ENCODE measurements at regions of chr15 and their contacts with region 1.

Region 1: DNA sequence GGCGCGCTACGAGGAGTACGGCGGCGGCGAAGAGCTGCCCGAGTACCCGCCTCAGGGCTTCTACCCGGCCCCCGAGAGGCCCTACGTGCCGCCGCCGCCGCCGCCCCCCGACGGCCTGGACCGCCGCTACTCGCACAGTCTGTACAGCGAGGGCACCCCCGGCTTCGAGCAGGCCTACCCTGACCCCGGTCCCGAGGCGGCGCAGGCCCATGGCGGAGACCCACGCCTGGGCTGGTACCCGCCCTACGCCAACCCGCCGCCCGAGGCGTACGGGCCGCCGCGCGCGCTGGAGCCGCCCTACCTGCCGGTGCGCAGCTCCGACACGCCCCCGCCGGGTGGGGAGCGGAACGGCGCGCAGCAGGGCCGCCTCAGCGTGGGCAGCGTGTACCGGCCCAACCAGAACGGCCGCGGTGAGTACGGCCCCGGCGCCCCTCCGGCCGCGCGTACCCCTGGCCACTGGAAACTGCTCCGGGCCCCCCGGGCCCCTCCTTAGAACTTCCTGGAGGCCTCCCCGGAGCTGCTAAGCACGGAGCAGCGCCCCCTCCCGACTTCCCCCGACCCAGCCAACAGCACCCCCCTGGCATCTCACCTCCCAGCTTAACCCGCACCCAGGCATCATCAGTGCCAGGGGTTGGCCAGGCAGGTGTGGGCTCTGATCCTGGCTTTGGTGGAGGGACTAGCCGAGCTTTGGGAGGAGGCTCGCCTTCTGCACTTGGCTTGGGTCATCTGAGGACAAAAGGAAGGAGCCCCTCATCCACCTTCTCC is 1.4 kb downstream of the LOXL1 start:
- DNase-seq: peak; percentile 58 to 85 (median 74)
- ATAC-seq: peak; percentile 90 to 92 (median 91)
- H3K4me3 ChIP-seq: peak overlapping the region; percentile 42 to 50
- H3K4me3 Mint-ChIP-seq: peak overlapping the region; percentile 65 to 76 (median 66)
- H3K27ac ChIP-seq: peak overlapping the region; percentile 3
- H3K27ac Mint-ChIP-seq: peak overlapping the region; percentile 64 to 83
- H3K4me1 ChIP-seq: peaks cover 3 to 56% of the 10 kb centered on the region in 2 experiments
- H3K4me1 Mint-ChIP-seq: peaks cover 45 to 57% (median 50%) of the 10 kb centered on the region in 3 donors
- H3K27me3 ChIP-seq: peaks cover 0 to 4% of the 10 kb centered on the region in 2 experiments
- H3K27me3 Mint-ChIP-seq: no peaks in the 10 kb centered on the region

Region 2: DNA sequence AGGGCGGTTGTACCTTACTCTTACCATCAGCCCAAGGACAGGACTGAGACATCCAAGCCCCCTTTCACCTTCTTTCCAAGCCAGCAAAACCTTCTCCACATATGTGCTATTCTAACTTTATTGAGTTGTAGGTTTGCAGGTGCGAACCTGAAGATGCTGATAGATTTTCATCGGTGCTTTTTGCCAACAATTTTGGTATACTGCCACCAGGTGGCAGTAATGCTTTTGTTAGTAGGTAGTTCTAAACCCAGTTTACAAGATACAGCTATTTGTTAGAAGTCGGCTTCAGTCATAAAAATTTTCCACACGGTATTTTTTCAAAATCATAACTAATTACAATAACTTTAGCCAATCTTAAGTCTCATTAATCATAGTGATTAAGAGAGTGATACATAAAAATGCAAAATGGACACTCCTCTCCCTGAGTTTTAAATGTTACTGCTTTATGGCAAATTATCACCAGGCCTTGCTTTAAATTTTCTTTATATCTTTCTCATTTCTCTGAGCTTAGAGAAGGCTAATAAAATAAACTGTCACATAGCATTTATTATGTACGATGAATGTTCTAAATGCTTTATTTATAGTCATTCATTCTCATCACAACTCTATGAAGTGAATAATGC is 53.7 kb before region 1 on chr15:
- CTCF ChIA-PET with region 1: interaction called in 1 of 2 experiments, 15 read pairs
- POLR2A ChIA-PET with region 1: no interaction called
- DNase-seq: peak in 24 of 35 experiments; percentile 2 to 72 (median 18)
- ATAC-seq: no peak
- H3K4me3 ChIP-seq: no peak overlapping the region
- H3K4me3 Mint-ChIP-seq: no peak overlapping the region
- H3K27ac ChIP-seq: no peak overlapping the region
- H3K27ac Mint-ChIP-seq: no peak overlapping the region
- H3K4me1 ChIP-seq: no peaks in the 10 kb centered on the region
- H3K4me1 Mint-ChIP-seq: no peaks in the 10 kb centered on the region
- H3K27me3 ChIP-seq: peaks cover 0 to 25% of the 10 kb centered on the region in 2 experiments
- H3K27me3 Mint-ChIP-seq: peaks cover 33 to 51% of the 10 kb centered on the region in 2 donors

Region 3: DNA sequence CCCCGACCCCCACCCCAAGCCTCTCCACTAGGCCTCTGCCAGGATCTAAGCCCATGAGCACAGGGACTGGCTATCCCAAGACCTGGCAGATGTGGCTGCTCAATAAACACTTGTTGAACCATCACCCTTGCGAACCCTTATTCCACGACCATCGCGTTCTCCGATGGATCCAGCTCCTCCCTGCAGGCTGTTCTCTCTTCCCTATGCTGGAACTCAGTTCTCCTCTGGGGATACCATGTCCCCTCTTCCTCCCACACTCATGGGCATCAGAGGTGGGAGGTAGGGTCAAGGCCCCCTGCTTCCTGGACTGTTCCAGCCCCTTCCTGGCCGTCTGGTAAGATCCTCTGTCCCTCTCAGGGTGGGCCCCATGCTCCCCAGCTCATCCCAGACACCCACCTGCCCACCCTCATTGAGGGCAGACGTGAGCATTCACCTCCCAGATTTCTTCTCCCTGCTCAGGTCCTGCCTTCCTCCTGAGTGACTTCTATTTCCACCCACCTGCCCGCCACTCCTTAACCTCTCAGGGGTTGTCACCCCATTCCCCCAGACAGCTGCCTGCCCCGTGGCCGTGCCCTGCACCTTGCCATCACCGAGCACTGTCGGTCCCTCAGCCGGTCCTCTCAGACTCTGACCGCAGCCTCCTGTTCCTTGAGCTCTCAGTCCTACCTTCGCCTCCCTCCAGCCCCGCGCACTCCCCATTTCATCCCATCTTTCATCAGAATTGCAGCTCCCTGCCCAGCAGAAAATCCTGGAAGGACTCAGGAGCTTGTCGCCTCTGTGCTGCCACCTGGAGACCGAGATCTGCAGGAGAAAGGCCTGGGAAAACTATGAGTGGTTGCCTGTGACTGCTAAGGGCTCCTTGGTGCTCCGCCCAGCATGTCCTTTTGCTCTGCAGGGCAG is 108.9 kb after region 1 on chr15:
- CTCF ChIA-PET with region 1: no interaction called
- POLR2A ChIA-PET with region 1: no interaction called
- DNase-seq: no peak
- ATAC-seq: no peak
- H3K4me3 ChIP-seq: no peak overlapping the region
- H3K4me3 Mint-ChIP-seq: no peak overlapping the region
- H3K27ac ChIP-seq: no peak overlapping the region
- H3K27ac Mint-ChIP-seq: peak overlapping the region in 1 of 2 donors; percentile 39
- H3K4me1 ChIP-seq: no peaks in the 10 kb centered on the region
- H3K4me1 Mint-ChIP-seq: no peaks in the 10 kb centered on the region
- H3K27me3 ChIP-seq: no peaks in the 10 kb centered on the region
- H3K27me3 Mint-ChIP-seq: no peaks in the 10 kb centered on the region

Region 4: GRCh38 chr15:75659141-75659771 is 1731.6 kb after region 1 on chr15:
- CTCF ChIA-PET with region 1: interaction called in 1 of 2 experiments, 10 read pairs
- POLR2A ChIA-PET with region 1: no interaction called
- DNase-seq: no peak
- ATAC-seq: no peak
- H3K4me3 ChIP-seq: no peak overlapping the region
- H3K4me3 Mint-ChIP-seq: no peak overlapping the region
- H3K27ac ChIP-seq: no peak overlapping the region
- H3K27ac Mint-ChIP-seq: no peak overlapping the region
- H3K4me1 ChIP-seq: no peaks in the 10 kb centered on the region
- H3K4me1 Mint-ChIP-seq: no peaks in the 10 kb centered on the region
- H3K27me3 ChIP-seq: no peaks in the 10 kb centered on the region
- H3K27me3 Mint-ChIP-seq: no peaks in the 10 kb centered on the region

Measured in T-cell (primary cell).